ENCODE measurements at regions of chr20 and their contacts with region 1.

Region 1: GRCh38 chr20:59751056-59751688 is 146.8 kb downstream of the PHACTR3 start:
- DNase-seq: peak; percentile 65 to 89 (median 88)
- ATAC-seq: peak; percentile 62 to 65
- H3K4me3 ChIP-seq: no peak overlapping the region
- H3K27ac ChIP-seq: no peak overlapping the region
- H3K4me1 ChIP-seq: peaks cover 12% of the 10 kb centered on the region
- H3K27me3 ChIP-seq: no peaks in the 10 kb centered on the region

Region 2: DNA sequence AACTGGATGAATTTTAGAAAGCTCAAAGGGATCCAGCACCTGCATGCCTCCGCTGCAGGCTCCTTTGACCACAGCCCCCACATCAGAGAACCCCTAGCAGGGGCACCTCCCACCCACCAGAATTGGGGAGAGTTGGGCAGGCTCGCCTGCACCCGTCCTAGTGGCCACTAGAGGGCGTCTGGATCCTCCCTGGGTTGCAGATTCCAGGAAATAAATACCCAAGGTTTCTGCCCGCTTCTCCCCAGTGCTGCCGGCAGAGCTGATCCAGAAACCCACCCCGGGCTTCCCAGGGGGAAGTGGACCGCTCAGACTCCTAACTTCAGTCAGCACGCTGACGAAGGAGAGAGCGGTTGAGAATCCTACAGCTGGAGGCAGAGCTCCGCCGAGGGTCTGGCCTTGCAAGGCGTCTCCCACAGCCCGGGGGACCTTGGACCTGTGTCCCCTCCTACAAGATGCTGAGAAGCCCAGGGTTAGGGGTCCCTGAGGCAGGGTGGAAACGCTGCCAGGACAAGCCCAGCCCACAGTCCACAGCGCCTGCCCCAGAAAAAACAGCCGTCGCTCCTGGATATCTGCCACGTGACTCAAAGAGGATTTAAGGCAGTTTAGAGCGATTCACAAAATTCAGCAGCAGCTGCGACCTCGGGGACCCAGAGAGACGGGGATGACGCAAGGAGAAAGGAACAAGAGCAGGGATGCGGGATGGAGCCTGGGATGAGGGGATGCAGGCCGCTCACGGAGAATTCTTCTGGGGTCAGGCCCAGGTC is 179.4 kb before region 1 on chr20:
- intact Hi-C with region 1: loop called in 3 of 4 experiments (anchors 5 to 10 kb)
- DNase-seq: peak; percentile 75 to 86 (median 83)
- ATAC-seq: peak; percentile 69 to 78
- H3K4me3 ChIP-seq: peak overlapping the region; percentile 51
- H3K27ac ChIP-seq: no peak overlapping the region
- H3K4me1 ChIP-seq: no peaks in the 10 kb centered on the region
- H3K27me3 ChIP-seq: no peaks in the 10 kb centered on the region

Region 3: DNA sequence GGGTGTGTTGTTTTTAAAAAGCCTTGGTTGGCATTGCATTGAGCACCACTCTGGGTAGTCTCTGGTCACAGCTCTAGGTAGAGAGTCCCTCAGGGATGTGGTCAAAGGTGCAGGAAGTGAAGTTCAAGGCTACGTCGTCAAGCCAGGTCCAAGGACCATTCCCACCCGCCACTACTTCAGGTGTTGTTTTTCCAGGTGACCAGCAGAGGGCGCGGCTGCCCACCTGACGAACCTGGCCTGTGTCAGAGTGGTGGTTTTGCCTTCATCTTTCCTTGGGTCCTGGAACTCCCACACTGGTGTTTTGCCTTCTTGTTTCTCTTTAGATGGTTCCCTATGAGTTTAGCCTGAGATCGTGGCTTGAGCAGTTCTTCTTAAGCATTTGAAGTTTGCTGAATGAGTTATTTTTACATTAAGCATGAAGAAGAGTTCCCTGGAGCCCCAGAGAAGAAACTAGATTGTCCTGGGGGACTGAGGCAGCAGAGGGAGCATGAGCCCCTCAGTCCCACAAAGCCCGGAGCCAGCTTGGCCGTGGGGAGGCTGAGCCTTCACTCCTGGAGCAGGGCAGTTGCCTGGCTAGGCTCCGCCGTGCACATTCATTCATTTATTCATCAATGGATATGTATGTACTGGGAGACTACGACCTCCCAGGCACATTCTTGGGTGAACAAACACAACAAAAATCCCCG is 152.4 kb before region 1 on chr20:
- intact Hi-C with region 1: loop called (anchors 1 to 5 kb)
- DNase-seq: no peak
- ATAC-seq: peak; percentile 54 to 61
- H3K4me3 ChIP-seq: no peak overlapping the region
- H3K27ac ChIP-seq: no peak overlapping the region
- H3K4me1 ChIP-seq: no peaks in the 10 kb centered on the region
- H3K27me3 ChIP-seq: no peaks in the 10 kb centered on the region

Region 4: GRCh38 chr20:59603781-59604541 is 147.2 kb before region 1 on chr20 and contains the start of gene PHACTR3:
- intact Hi-C with region 1: loop called in 3 of 4 experiments (anchors 5 kb)
- DNase-seq: no peak
- ATAC-seq: peak in 1 of 2 donors; percentile 11
- H3K4me3 ChIP-seq: peak within 1 kb of the TSS; percentile 61
- H3K27ac ChIP-seq: no peak within 1 kb of the TSS
- H3K4me1 ChIP-seq: no peaks in the 10 kb centered on the region
- H3K27me3 ChIP-seq: peaks cover 2% of the 10 kb centered on the region
- total RNA-seq, gene PHACTR3: 2.8 to 8.4 (median 4.2) TPM

Region 5: DNA sequence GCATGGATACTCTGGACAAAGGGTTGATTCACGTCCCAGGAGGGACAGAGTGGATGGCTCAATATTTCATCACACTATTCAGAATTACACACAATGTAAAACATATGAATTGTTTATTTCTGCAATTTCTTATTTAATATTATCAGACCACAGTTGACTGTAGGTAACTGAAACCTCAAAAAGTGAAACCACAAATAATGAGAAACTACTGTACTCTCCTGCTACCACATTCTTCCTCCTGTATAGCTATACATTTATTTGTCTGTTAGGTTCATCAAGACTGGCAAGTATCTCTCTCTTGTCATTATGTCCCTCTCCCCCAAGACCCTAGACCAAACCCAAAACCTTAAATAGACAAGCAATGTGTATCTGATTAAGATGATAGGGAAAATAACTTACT is 122.2 kb after region 1 on chr20:
- intact Hi-C with region 1: no loop called
- DNase-seq: no peak
- ATAC-seq: no peak
- H3K4me3 ChIP-seq: no peak overlapping the region
- H3K27ac ChIP-seq: no peak overlapping the region
- H3K4me1 ChIP-seq: no peaks in the 10 kb centered on the region
- H3K27me3 ChIP-seq: no peaks in the 10 kb centered on the region

Measured in right cardiac atrium (tissue), 5 donors.